Lower leg skin (tissue), 4 donors: ENCODE measurements at regions of chr6 and their contacts with region 1.

Region 1: GRCh38 chr6:100126790-100127484 is 132.9 kb upstream of the MCHR2 start:
- DNase-seq: no peak
- H3K4me3 ChIP-seq: no peak overlapping the region
- CTCF ChIP-seq: no peak
- POLR2A ChIP-seq: no peak

Region 2: DNA sequence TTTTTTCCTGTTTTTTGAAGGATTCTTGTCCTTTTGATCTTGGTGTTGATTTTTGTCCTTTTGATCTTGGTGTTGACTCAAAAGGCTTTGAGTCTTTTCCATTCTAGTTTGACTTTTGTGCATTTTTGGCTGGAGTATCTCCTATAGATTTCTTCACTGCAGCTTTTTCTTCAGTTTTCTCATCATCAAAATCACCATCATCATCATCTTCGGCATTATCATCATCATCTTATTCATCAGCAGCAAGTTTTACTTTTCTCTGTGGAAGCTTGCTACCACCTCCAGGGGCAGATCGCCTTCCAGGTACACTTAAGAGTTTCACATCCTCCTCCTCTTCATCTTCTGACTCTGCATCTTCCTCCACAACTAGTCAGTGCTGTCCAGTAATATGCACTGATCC is 76.4 kb before region 1 on chr6:
- intact Hi-C with region 1: no loop called
- DNase-seq: no peak
- H3K4me3 ChIP-seq: no peak overlapping the region
- CTCF ChIP-seq: no peak
- POLR2A ChIP-seq: no peak

Region 3: GRCh38 chr6:100479179-100480035 is 352.5 kb after region 1 on chr6:
- intact Hi-C with region 1: loop called (anchors 10 kb)
- DNase-seq: no peak
- H3K4me3 ChIP-seq: no peak overlapping the region
- CTCF ChIP-seq: no peak
- POLR2A ChIP-seq: no peak